Mucosa of descending colon (tissue), 3 donors: ENCODE measurements at regions of chr21 and their contacts with region 1.

Region 1: DNA sequence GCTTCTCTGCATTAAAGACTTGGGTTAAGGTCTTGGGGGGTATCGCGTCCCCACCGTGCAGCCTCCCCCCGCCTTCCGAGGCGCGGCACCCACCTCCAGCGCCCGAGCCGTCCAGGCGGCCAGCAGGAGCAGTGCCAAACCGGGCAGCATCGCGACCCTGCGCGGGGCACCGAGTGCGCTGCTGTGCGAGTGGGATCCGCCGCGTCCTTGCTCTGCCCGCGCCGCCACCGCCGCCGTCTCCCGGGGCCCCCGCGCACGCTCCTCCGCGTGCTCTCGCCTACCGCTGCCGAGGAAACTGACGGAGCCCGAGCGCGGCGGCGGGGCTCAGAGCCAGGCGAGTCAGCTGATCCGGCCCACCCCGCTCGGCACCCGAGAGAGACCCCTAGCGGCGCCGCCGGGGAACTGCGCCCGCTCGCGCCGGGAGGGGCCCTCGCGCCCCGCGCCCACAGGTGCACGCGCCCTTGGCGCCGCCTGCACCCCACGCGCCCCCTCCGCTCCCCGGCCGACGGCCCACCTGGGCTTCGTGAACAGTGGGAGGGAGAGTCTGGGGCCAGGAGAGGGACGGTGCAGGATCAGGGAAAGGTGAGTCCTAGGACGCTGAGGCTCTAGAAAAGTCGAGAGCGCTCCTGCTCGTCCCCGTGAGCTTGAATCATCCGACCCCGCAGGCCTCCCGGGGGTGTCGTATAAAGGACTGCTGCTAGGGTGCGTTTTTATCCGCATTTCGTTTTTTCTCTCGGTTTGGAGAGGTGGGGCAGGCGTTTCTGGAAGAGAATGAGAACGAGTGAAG is at the start of gene APP:
- DNase-seq: peak; percentile 88 to 95 (median 90)
- ATAC-seq: peak; percentile 90
- H3K4me3 ChIP-seq: peak within 1 kb of the TSS; percentile 80
- H3K4me1 ChIP-seq: peaks cover 4% of the 10 kb centered on the region
- CTCF ChIP-seq: peak; percentile 99
- total RNA-seq, gene APP: 573 to 666 (median 579) TPM

Region 2: DNA sequence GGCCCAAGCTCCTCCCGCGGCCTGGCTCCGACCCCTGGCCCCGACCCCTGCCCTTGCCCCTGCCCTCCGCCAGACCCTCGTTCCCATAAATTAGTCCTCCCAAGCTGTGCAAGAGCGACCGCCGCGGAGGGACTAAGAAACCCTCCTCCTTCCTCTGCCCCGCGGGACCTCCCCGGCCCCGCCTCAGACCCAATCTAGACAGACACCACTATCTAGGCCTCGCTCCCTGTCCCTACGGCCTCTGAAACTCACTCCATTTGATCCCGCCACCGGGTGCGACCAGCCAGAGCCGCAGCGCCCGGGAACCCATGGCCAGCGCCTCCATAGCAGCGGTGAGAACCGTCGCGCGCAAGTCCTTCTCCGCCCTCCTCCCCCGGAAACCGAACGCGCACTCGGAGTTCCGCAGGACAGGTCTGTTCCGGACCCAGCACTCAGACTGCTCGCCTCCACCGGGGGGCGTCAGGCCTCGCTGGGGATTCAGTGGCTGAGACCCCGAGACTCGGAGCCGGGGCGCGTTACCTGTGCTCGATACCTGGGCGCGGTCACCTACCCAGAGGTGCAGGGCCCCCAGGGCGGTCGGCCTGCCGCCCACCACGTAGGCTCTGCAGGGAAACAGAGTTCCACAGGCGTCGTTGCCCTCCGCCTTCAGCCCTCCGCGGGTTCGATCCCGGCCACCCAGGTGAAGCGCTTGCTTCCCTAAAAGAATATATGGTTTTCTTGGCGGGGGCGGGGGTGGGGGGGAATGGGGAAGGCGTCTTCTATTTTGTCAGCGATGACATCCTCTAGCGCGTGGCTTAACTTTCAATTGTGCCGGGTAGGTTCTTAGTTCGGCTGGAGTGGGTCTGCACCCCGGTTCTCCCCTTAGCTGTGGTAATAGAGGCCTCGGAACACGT is 563.3 kb before region 1 on chr21 and contains the start of gene MRPL39:
- intact Hi-C with region 1: loop called in 1 of 2 experiments (anchors 5 kb)
- DNase-seq: peak; percentile 88 to 93 (median 92)
- ATAC-seq: peak; percentile 98
- H3K4me3 ChIP-seq: peak within 1 kb of the TSS; percentile 64
- H3K4me1 ChIP-seq: peaks cover 11% of the 10 kb centered on the region
- CTCF ChIP-seq: no peak
- total RNA-seq, gene MRPL39: 21.6 to 27.9 (median 22.1) TPM

Region 3: GRCh38 chr21:25887166-25887565 is 283.5 kb before region 1 on chr21:
- intact Hi-C with region 1: loop called in 1 of 2 experiments (anchors 5 kb)
- DNase-seq: peak in 2 of 3 donors; percentile 43 to 50
- ATAC-seq: peak; percentile 59
- H3K4me3 ChIP-seq: no peak overlapping the region
- H3K4me1 ChIP-seq: peaks cover 47% of the 10 kb centered on the region
- CTCF ChIP-seq: no peak